Heart left ventricle (tissue), 16 donors: ENCODE measurements at regions of chr1 and their contacts with region 1.

Region 1: GRCh38 chr1:175572932-175573862 is 170.2 kb downstream of the TNR start:
- DNase-seq: no peak
- ATAC-seq: no peak
- H3K4me3 ChIP-seq: no peak overlapping the region
- H3K27ac ChIP-seq: no peak overlapping the region
- H3K4me1 ChIP-seq: no peaks in the 10 kb centered on the region
- H3K27me3 ChIP-seq: peaks cover 0 to 6% (median 0%) of the 10 kb centered on the region in 9 donors
- CTCF ChIP-seq: no peak
- POLR2A ChIP-seq: no peak

Region 2: GRCh38 chr1:175514387-175514953 is 58.7 kb before region 1 on chr1:
- intact Hi-C with region 1: loop called in 1 of 10 experiments (anchors 10 kb)
- DNase-seq: peak in 2 of 5 donors; percentile 25
- ATAC-seq: peak; percentile 45 to 87 (median 65)
- H3K4me3 ChIP-seq: no peak overlapping the region
- H3K27ac ChIP-seq: peak overlapping the region in 3 of 12 donors; percentile 2 to 47 (median 4)
- H3K4me1 ChIP-seq: peaks cover 0 to 16% (median 6%) of the 10 kb centered on the region in 12 donors
- H3K27me3 ChIP-seq: peaks cover 0 to 3% (median 0%) of the 10 kb centered on the region in 9 donors
- CTCF ChIP-seq: no peak
- POLR2A ChIP-seq: no peak